Ascending aorta (tissue), 2 donors: ENCODE measurements at regions of chr2 and their contacts with region 1.

Region 1: DNA sequence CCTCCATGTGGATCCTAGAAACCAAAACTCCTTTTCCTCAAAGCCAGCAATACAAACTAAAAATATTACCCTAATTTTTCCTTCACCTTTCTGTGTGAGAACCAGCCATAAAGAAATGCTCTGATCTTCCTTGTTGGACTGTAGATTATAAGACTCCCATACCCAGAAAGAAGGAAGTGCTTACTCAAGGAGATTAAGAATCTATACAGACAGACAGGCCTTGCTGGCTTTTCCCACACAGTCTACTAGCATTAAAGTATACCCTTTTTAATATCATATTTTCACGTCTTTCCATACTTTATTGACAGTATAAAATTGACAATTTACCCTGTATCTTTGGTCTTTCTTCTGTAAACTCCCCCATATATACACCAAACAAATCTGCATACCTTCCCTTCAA is 139.0 kb downstream of the GULP1 start:
- DNase-seq: no peak
- H3K4me3 ChIP-seq: no peak overlapping the region
- H3K27ac ChIP-seq: peak overlapping the region; percentile 17 to 22
- H3K4me1 ChIP-seq: no peaks in the 10 kb centered on the region
- H3K27me3 ChIP-seq: no peaks in the 10 kb centered on the region
- CTCF ChIP-seq: no peak

Region 2: GRCh38 chr2:188388831-188389230 is 41.9 kb before region 1 on chr2:
- intact Hi-C with region 1: loop called (anchors 5 kb)
- DNase-seq: no peak
- H3K4me3 ChIP-seq: no peak overlapping the region
- H3K27ac ChIP-seq: no peak overlapping the region
- H3K4me1 ChIP-seq: no peaks in the 10 kb centered on the region
- H3K27me3 ChIP-seq: no peaks in the 10 kb centered on the region
- CTCF ChIP-seq: no peak